MCF 10A (cell line): ENCODE measurements at regions of chr2 and their contacts with region 1.

Region 1: GRCh38 chr2:191869178-191869577 is 22.3 kb upstream of the CAVIN2 start:
- DNase-seq: peak; percentile 60
- H3K4me3 Mint-ChIP-seq: no peak overlapping the region
- H3K27ac Mint-ChIP-seq: peak overlapping the region; percentile 20
- H3K4me1 Mint-ChIP-seq: peaks cover 50% of the 10 kb centered on the region
- H3K27me3 Mint-ChIP-seq: no peaks in the 10 kb centered on the region
- CTCF ChIP-seq: no peak

Region 2: DNA sequence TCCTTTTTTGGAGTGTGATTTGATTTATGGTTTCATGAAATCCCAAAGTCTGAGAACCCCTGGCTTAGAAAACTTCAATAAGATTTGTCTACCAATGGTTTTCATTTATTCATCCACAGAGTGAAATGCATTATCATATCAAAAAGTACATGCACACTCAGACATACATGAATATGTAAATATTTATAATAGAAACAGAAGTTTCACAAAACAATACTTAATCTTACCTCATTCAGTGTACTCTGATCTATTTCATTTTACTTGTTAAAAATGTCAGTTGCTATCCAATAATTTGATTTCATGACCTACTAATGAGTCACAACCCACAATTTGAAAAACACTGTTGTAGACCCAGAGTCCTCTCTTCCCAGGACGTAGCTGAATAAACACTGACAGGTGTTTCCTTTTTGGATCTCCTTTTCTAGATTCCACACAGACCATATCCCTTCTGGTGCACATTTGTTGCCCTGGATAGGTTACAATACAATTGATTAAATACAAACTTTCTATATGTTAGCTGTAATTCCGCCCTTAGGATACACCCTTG is 11.8 kb before region 1 on chr2:
- CTCF ChIA-PET with region 1: interaction called, 14 read pairs
- POLR2A ChIA-PET with region 1: interaction called, 7 read pairs
- intact Hi-C with region 1: no loop called
- DNase-seq: peak; percentile 55
- H3K4me3 Mint-ChIP-seq: no peak overlapping the region
- H3K27ac Mint-ChIP-seq: no peak overlapping the region
- H3K4me1 Mint-ChIP-seq: peaks cover 14% of the 10 kb centered on the region
- H3K27me3 Mint-ChIP-seq: no peaks in the 10 kb centered on the region
- CTCF ChIP-seq: no peak

Region 3: DNA sequence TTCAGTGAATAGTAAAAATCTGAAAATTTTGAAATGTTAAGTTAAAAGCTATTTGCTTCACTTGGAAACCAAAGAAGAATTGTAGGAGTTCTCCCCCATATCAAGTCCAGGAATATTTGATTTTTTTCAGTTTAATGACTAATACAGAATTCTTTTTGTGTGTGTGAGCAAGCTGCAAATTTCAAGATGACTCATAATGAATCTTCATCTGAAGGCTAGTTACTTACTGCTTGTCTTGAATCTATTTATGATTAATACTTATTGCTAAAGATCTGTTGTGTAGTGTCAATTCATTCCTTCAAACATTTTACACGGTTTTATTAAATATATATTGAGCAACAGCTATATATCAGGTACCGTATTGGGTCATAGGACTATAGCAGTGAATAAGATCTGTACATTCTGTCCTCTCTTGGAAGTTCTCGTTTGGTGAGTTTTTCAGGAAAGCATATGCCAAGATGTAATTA is 25.5 kb after region 1 on chr2:
- CTCF ChIA-PET with region 1: interaction called, 23 read pairs
- POLR2A ChIA-PET with region 1: interaction called, 55 read pairs
- intact Hi-C with region 1: no loop called
- DNase-seq: peak; percentile 81
- H3K4me3 Mint-ChIP-seq: peak overlapping the region; percentile 26
- H3K27ac Mint-ChIP-seq: peak overlapping the region; percentile 87
- H3K4me1 Mint-ChIP-seq: peaks cover 43% of the 10 kb centered on the region
- H3K27me3 Mint-ChIP-seq: no peaks in the 10 kb centered on the region
- CTCF ChIP-seq: no peak

Region 4: DNA sequence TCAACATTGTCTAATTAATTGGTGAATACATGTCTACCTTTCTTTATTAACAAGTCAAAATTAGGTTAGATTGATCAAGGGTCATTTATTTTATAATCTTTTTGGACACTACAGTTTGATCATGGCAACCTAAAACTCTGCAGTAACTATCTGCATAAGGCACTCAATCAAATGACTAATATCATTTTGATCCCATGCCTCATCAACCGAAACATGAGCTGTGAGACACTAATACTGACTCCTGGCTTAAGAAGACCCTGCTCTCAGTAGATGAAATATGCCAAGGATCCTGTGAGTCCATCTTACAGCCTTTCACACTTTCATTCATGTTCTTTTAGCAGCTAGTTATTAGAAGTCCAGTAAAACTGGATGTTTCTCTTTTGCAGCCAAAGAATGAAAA is 147.1 kb after region 1 on chr2:
- CTCF ChIA-PET with region 1: no interaction called
- POLR2A ChIA-PET with region 1: no interaction called
- intact Hi-C with region 1: no loop called
- DNase-seq: no peak
- H3K4me3 Mint-ChIP-seq: no peak overlapping the region
- H3K27ac Mint-ChIP-seq: no peak overlapping the region
- H3K4me1 Mint-ChIP-seq: no peaks in the 10 kb centered on the region
- H3K27me3 Mint-ChIP-seq: no peaks in the 10 kb centered on the region
- CTCF ChIP-seq: no peak

Region 5: DNA sequence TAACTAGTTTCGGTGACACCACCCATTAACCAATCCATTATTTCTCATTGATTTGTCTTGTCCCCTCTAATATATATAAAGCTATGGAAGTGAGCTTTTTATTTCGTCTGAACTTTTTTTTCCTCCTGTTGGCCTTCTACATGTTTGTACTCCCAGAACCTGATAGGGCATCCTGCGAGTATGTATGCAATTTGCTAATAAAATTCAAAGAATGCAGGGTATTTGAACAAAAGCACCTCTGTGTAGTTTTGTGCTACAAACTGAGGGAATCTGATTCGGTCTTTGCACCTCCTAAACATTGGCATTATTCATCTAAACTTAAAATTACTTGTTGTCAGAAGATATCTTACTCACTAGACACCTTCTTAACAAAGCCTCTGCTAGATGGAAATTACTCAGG is 568.5 kb after region 1 on chr2:
- CTCF ChIA-PET with region 1: no interaction called
- POLR2A ChIA-PET with region 1: no interaction called
- intact Hi-C with region 1: no loop called
- DNase-seq: no peak
- H3K4me3 Mint-ChIP-seq: no peak overlapping the region
- H3K27ac Mint-ChIP-seq: no peak overlapping the region
- H3K4me1 Mint-ChIP-seq: peaks cover 6% of the 10 kb centered on the region
- H3K27me3 Mint-ChIP-seq: no peaks in the 10 kb centered on the region
- CTCF ChIP-seq: no peak